Heart right ventricle (tissue), 16 donors: ENCODE measurements at regions of chr4 and their contacts with region 1.

Region 1: DNA sequence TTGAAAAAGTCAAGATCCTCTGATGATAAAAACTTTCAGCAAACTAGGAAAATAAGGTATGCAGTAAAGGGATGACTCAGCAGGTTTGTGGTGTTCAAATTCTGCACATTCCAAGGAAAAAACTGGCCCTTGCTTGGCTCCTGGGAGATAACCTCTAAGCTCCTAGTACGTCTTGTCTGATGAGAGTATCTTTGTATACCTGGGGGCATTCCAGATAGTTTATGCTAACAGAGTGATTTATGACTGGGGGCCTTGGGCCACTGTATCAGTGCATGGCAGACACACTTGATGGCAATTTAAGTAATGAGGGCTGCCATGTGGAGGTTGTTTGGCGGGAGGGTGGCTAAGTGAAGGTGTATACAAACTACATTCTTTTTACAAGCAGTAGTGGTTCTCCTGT is 56.9 kb downstream of the NSG1 start:
- DNase-seq: no peak
- ATAC-seq: no peak
- H3K4me3 ChIP-seq: no peak overlapping the region
- H3K27ac ChIP-seq: no peak overlapping the region
- H3K4me1 ChIP-seq: peaks cover 0 to 5% (median 0%) of the 10 kb centered on the region in 9 donors
- H3K27me3 ChIP-seq: no peaks in the 10 kb centered on the region
- CTCF ChIP-seq: no peak

Region 2: GRCh38 chr4:4480685-4481398 is 37.0 kb after region 1 on chr4:
- intact Hi-C with region 1: loop called in 1 of 10 experiments (anchors 1 kb)
- DNase-seq: no peak
- ATAC-seq: peak in 4 of 8 donors; percentile 34 to 58 (median 44)
- H3K4me3 ChIP-seq: no peak overlapping the region
- H3K27ac ChIP-seq: no peak overlapping the region
- H3K4me1 ChIP-seq: peaks cover 0 to 14% (median 6%) of the 10 kb centered on the region in 9 donors
- H3K27me3 ChIP-seq: no peaks in the 10 kb centered on the region
- CTCF ChIP-seq: peak in 7 of 9 donors; percentile 24 to 50 (median 35)